IMR-90 (cell line): ENCODE measurements at regions of chr6 and their contacts with region 1.

Region 1: DNA sequence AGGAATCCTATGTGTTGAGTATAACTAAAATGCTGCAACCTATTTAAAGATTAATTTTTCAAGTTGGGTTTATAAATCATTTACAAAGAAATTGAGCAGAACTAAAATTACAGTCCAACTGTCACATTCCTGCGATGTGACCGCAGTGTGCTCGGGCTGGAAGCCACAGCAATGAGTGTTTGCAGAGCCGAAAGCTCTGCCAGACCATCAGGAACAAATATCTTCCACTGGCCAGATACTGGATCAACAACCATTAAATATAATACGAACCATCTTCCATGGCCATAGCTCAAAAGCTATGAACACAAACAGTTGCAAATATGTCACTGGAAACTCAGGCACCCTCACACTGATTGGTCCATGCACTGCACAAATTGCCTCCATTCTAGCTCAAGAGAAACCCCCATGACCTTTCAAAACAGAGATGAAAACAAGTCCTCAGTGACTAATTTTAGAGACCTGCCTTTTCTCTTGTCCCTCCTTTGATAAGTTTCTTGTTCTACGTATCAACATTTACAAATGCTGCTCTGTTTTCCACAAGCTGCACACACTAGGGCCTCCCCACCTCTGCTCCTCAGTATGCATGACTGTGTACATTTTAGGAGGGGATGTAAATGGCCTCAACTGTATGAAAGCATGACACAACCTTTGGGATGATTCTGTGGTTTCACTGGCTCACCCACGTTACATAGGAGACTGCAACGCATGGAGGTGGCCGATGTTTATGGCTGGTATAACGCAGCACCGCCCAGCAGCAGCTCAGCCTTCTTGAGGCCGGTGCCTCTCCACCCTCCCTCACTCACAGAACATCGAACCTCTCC is 171.7 kb downstream of the WDR27 start:
- DNase-seq: peak; percentile 80
- ATAC-seq: peak; percentile 80
- H3K4me3 ChIP-seq: no peak overlapping the region
- H3K27ac ChIP-seq: peak overlapping the region; percentile 51
- H3K4me1 ChIP-seq: peaks cover 10% of the 10 kb centered on the region
- H3K27me3 ChIP-seq: no peaks in the 10 kb centered on the region
- CTCF ChIP-seq: no peak
- POLR2A ChIP-seq: no peak
- RAD21 ChIP-seq: no peak

Region 2: GRCh38 chr6:168157272-168158007 is 1372.7 kb before region 1 on chr6:
- CTCF ChIA-PET with region 1: no interaction called
- POLR2A ChIA-PET with region 1: no interaction called
- dilution Hi-C with region 1: no loop called
- in situ Hi-C with region 1: no loop called
- intact Hi-C with region 1: loop called (anchors 10 kb)
- DNase-seq: peak; percentile 78
- ATAC-seq: peak; percentile 88
- H3K4me3 ChIP-seq: no peak overlapping the region
- H3K27ac ChIP-seq: no peak overlapping the region
- H3K4me1 ChIP-seq: peaks cover 8% of the 10 kb centered on the region
- H3K27me3 ChIP-seq: no peaks in the 10 kb centered on the region
- CTCF ChIP-seq: no peak
- POLR2A ChIP-seq: no peak; the same call in 1 of the 2 replicates
- RAD21 ChIP-seq: no peak

Region 3: DNA sequence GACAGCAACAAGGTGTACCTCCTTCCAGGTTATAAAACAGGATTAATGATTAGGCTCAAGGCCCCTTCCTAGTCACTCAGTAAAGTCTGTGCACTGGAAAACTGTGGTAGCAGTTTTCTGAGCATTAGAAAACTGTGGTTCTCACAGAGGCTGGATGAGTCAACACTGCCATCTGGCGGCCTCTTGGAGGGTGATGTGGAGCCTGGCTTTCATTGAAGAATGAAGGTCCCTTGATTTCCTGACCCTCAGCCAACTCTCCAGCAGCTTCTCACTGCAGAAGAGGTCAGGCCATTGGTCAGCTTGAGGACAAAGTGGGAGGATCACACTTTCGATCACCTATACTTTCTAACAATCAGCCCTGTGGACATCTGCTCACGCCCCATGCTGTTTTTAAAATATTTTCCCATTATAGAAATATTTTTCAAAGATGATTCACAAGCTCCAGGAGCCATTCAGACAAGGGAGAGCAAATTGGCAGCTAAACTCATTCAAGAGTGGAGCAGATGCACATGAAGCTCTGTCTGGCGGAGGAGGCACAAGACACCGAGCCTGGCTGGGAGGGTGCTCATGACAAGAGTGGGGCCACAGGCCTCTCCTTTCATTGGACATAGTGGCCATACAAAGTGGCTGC is 999.8 kb after region 1 on chr6:
- CTCF ChIA-PET with region 1: interaction called, 3 read pairs
- POLR2A ChIA-PET with region 1: no interaction called
- dilution Hi-C with region 1: no loop called
- in situ Hi-C with region 1: no loop called
- intact Hi-C with region 1: loop called (anchors 10 kb)
- DNase-seq: peak; percentile 69
- ATAC-seq: peak; percentile 88
- H3K4me3 ChIP-seq: no peak overlapping the region
- H3K27ac ChIP-seq: no peak overlapping the region
- H3K4me1 ChIP-seq: peaks cover 6% of the 10 kb centered on the region
- H3K27me3 ChIP-seq: no peaks in the 10 kb centered on the region
- CTCF ChIP-seq: peak; percentile 92
- POLR2A ChIP-seq: no peak
- RAD21 ChIP-seq: peak; percentile 95